Mammary epithelial cell (primary cell): ENCODE measurements at regions of chr5 and their contacts with region 1.

Region 1: GRCh38 chr5:126354012-126354857 is 69.0 kb upstream of the GRAMD2B start:
- DNase-seq: peak; percentile 93
- H3K4me3 ChIP-seq: peak overlapping the region; percentile 10 to 29 (median 24)
- H3K27ac ChIP-seq: peak overlapping the region; percentile 99
- H3K4me1 ChIP-seq: peaks cover 35% of the 10 kb centered on the region
- H3K27me3 ChIP-seq: no peaks in the 10 kb centered on the region
- CTCF ChIP-seq: peak; percentile 48 to 59

Region 2: GRCh38 chr5:126395198-126395597 is 41.0 kb after region 1 on chr5:
- CTCF ChIA-PET with region 1: no interaction called
- dilution Hi-C with region 1: no loop called
- in situ Hi-C with region 1: no loop called
- intact Hi-C with region 1: loop called (anchors 2 kb)
- DNase-seq: peak; percentile 90
- H3K4me3 ChIP-seq: peak overlapping the region in 1 of 3 experiments; percentile 11
- H3K27ac ChIP-seq: peak overlapping the region; percentile 92
- H3K4me1 ChIP-seq: peaks cover 20% of the 10 kb centered on the region
- H3K27me3 ChIP-seq: no peaks in the 10 kb centered on the region
- CTCF ChIP-seq: no peak

Region 3: GRCh38 chr5:126433701-126434100 is 79.5 kb after region 1 on chr5:
- CTCF ChIA-PET with region 1: no interaction called
- dilution Hi-C with region 1: loop called (anchors 5 kb)
- in situ Hi-C with region 1: no loop called
- intact Hi-C with region 1: no loop called
- DNase-seq: peak; percentile 68
- H3K4me3 ChIP-seq: no peak overlapping the region
- H3K27ac ChIP-seq: peak overlapping the region; percentile 59
- H3K4me1 ChIP-seq: peaks cover 15% of the 10 kb centered on the region
- H3K27me3 ChIP-seq: no peaks in the 10 kb centered on the region
- CTCF ChIP-seq: no peak

Region 4: GRCh38 chr5:126471875-126472537 is 117.8 kb after region 1 on chr5:
- CTCF ChIA-PET with region 1: interaction called, 3 read pairs
- dilution Hi-C with region 1: no loop called
- in situ Hi-C with region 1: loop called in 1 of 2 experiments (anchors 25 kb)
- intact Hi-C with region 1: loop called (anchors 5 kb)
- DNase-seq: peak; percentile 86
- H3K4me3 ChIP-seq: no peak overlapping the region
- H3K27ac ChIP-seq: peak overlapping the region; percentile 80
- H3K4me1 ChIP-seq: peaks cover 32% of the 10 kb centered on the region
- H3K27me3 ChIP-seq: no peaks in the 10 kb centered on the region
- CTCF ChIP-seq: no peak

Region 5: GRCh38 chr5:126531543-126532120 is 177.4 kb after region 1 on chr5:
- CTCF ChIA-PET with region 1: no interaction called
- dilution Hi-C with region 1: loop called (anchors 5 kb)
- in situ Hi-C with region 1: loop called in 1 of 2 experiments (anchors 5 kb)
- intact Hi-C with region 1: no loop called
- DNase-seq: peak; percentile 32
- H3K4me3 ChIP-seq: no peak overlapping the region
- H3K27ac ChIP-seq: no peak overlapping the region
- H3K4me1 ChIP-seq: peaks cover 18% of the 10 kb centered on the region
- H3K27me3 ChIP-seq: no peaks in the 10 kb centered on the region
- CTCF ChIP-seq: no peak

Region 6: DNA sequence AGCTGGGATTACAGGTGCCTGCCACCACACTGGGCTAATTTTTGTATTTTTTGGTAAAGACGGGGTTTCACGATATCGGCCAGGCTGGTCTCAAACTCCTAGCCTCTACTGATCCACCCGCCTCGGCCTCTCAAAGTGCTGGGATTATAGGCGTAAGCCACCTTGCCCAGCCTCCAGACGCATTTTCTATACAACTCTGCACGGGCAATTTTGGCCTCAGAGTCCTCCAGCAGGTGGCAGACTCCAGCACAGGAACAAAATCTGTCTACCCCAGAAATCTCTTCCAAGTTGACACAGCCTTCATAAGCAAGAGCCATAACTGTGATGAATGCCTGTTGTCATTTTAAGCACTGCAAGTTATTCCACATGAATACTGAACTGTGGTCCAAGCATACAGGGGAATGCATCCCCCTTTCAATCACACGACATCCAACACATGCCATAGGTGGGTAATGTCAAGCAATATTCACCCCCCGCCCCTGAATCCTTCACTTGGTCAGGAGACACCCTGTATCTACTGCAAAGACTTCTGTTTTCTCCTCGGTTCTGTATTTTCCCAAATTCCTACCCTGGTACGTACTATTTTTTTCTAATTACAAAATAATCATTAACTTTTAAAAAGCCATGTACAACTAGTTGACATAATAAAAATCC is 190.0 kb after region 1 on chr5:
- CTCF ChIA-PET with region 1: no interaction called
- dilution Hi-C with region 1: no loop called
- in situ Hi-C with region 1: loop called in 1 of 2 experiments (anchors 5 kb)
- intact Hi-C with region 1: loop called (anchors 1 kb)
- DNase-seq: peak; percentile 25
- H3K4me3 ChIP-seq: no peak overlapping the region
- H3K27ac ChIP-seq: no peak overlapping the region
- H3K4me1 ChIP-seq: no peaks in the 10 kb centered on the region
- H3K27me3 ChIP-seq: no peaks in the 10 kb centered on the region
- CTCF ChIP-seq: peak; percentile 42 to 64